ENCODE measurements at regions of chr4 and their contacts with region 1.

Region 1: DNA sequence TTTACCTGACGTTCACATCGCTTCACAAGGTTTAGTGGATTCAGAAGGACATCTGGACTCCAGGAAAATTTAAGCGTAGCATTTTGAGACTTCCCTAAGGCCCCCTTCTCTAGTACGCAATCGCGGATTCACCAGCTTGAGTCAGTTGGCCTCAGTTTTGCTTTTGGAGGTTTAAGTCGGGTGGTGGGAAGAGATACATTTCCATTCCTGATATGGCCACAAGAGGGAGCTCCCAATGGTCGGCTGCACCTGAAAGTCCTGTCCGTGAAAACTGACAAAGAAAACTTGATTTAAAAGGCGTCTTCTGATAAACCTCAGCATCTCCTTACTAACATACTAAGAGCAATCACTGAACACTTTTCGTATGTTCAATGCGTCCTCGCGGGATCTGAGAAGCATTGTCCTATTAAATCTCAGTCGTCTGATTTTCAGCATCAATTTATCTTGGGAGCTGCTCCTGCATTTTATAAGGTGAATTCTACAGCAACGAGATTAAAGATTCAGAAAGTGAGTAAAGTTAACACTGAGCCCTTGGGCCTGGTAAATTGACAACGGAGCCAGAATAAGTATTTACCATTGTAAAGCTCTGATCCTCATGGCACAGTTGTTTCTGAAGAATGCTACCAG is 50.6 kb downstream of the LGI2 start:
- DNase-seq: peak; percentile 47
- ATAC-seq: peak; percentile 50
- H3K4me3 Mint-ChIP-seq: no peak overlapping the region; the same call in 1 of the 2 replicates
- H3K27ac Mint-ChIP-seq: no peak overlapping the region
- H3K4me1 Mint-ChIP-seq: peaks cover 24% of the 10 kb centered on the region
- H3K27me3 Mint-ChIP-seq: no peaks in the 10 kb centered on the region; the same call in none of the 2 replicates
- CTCF ChIP-seq: peak; percentile 85

Region 2: DNA sequence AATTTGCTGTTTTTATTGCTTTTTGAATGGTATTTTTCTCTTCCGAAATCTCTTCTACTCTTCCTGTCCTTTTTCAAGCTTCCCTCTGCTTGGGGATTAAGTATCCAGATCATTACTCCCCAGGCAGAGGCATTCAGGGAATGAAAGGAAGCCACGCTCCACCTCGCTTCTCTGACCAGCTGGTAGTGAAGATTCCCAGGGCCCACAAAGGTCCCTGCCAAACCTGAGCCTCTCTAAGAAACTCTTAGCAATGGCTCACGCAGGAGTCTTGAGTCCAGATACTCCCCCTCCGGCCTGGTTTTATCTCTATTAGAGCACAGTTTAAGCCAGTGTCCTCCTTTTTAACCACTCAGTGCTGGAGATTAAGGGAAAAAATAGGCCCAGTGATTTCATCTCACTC is 236.2 kb before region 1 on chr4:
- CTCF ChIA-PET with region 1: interaction called, 11 read pairs
- POLR2A ChIA-PET with region 1: interaction called, 3 read pairs
- DNase-seq: peak; percentile 42
- ATAC-seq: peak; percentile 95
- H3K4me3 Mint-ChIP-seq: no peak overlapping the region
- H3K27ac Mint-ChIP-seq: peak overlapping the region; percentile 94
- H3K4me1 Mint-ChIP-seq: peaks cover 25% of the 10 kb centered on the region
- H3K27me3 Mint-ChIP-seq: no peaks in the 10 kb centered on the region
- CTCF ChIP-seq: no peak

Region 3: GRCh38 chr4:24794916-24795665 is 185.1 kb before region 1 on chr4 and contains the start of gene SOD3:
- CTCF ChIA-PET with region 1: interaction called, 11 read pairs
- POLR2A ChIA-PET with region 1: no interaction called
- DNase-seq: peak; percentile 72
- ATAC-seq: peak; percentile 92
- H3K4me3 Mint-ChIP-seq: peak within 1 kb of the TSS; percentile 70
- H3K27ac Mint-ChIP-seq: peak within 1 kb of the TSS; percentile 54
- H3K4me1 Mint-ChIP-seq: peaks cover 24% of the 10 kb centered on the region
- H3K27me3 Mint-ChIP-seq: peaks cover 59% of the 10 kb centered on the region
- CTCF ChIP-seq: no peak
- total RNA-seq, gene SOD3: 4.1 to 8.2 TPM (median 8.0 TPM) in 3 replicates

Region 4: DNA sequence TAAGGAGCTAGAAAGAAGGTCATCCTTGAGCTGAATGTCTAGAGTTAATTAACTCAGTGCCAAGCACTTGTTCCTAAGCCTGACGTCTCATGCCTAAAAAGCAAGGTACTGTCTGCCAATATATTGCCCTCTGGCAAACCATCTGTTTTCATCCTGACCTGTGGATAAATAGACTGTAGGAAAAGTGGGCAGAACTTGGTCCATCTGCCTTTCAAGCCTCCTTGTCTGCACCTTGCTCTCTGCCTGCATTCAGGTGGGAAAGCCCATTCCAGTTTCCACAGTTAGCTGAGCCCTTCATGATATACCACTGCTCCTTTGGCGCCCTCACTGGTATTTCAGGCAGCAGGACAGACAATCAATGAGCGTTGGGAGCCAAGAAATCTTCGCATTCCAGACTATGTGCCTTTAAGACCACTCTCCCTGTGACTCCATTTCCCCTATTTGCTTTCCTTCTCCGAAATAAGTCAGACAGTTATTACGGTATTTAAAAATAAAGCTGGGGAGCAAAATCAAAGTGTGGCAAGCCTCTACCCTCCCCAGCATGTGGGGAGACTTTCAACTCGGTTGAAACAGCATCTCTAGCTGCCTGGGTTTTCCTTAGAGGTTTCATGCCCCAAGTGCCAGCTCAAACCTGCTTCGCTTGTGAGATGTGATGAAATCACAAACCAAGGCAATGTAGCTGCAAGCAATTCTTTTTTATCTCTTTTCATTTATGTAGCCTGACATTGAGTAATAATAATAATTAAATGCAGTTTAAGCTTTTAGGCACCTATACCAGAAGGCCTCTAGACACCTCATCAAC is 64.9 kb before region 1 on chr4:
- CTCF ChIA-PET with region 1: interaction called, 11 read pairs
- POLR2A ChIA-PET with region 1: no interaction called
- DNase-seq: peak; percentile 18
- ATAC-seq: peak; percentile 5
- H3K4me3 Mint-ChIP-seq: no peak overlapping the region
- H3K27ac Mint-ChIP-seq: no peak overlapping the region
- H3K4me1 Mint-ChIP-seq: peaks cover 27% of the 10 kb centered on the region
- H3K27me3 Mint-ChIP-seq: peaks cover 40% of the 10 kb centered on the region
- CTCF ChIP-seq: no peak

Region 5: DNA sequence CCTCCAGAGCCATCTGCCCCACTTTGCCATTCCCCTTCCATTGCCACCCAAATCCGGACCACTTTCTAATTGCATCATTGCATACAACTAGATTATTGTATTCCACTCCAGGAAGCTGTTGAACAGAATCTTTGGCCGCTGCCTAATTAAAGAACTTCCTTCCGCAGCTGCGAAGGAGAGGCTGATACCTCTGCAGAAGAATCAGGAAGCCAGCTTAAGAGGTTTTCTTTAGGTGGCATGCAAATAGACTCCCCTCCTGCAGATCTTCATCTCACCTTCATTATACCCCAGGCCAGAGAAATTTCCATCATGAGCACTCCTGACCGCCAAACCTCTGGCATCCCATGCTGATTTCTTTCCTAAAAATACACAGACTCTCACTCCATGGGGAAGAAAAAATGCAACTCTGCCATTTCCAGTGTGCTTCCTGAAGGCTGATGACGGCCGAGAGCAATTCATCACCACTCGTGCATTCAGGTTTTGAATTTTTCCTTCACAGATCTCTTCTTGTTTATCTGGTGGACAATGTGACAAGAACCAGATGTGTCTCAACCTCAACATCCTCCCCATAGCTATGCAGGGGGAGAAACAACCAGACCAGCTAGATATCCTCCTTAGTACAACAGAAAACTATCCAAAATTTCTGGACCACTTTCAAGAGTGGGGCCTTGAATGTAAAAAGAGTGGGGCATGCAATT is 19.4 kb after region 1 on chr4:
- CTCF ChIA-PET with region 1: interaction called, 28 read pairs
- POLR2A ChIA-PET with region 1: no interaction called
- DNase-seq: no peak
- ATAC-seq: peak; percentile 91
- H3K4me3 Mint-ChIP-seq: peak overlapping the region; percentile 2; the same call in 1 of the 2 replicates
- H3K27ac Mint-ChIP-seq: peak overlapping the region; percentile 77
- H3K4me1 Mint-ChIP-seq: peaks cover 29% of the 10 kb centered on the region
- H3K27me3 Mint-ChIP-seq: no peaks in the 10 kb centered on the region; the same call in 1 of the 2 replicates
- CTCF ChIP-seq: no peak

Region 6: GRCh38 chr4:25031077-25031621 is 51.0 kb after region 1 on chr4:
- CTCF ChIA-PET with region 1: interaction called, 11 read pairs
- POLR2A ChIA-PET with region 1: no interaction called
- DNase-seq: peak; percentile 36
- ATAC-seq: peak; percentile 65
- H3K4me3 Mint-ChIP-seq: peak overlapping the region; percentile 70
- H3K27ac Mint-ChIP-seq: no peak overlapping the region
- H3K4me1 Mint-ChIP-seq: peaks cover 29% of the 10 kb centered on the region
- H3K27me3 Mint-ChIP-seq: peaks cover 58% of the 10 kb centered on the region
- CTCF ChIP-seq: no peak

Region 7: DNA sequence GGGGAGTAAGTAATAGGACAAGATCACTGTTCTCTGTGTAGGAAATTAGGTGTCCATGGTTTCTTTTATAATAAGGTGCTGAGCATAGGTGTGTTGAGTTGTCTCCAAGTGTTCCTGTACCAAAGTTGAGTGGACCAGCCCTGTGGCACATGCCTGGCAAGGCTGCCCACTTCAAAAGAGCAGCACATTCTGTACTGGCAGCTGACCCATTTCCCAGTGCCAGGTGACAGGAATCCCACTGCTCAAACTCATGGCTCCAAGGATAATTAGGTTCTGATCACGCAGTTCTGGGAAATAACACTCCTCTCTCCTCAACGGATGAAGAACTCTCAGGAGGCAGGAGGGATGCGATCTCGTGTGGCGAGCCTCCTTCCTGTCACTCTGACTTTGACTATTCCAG is 63.4 kb after region 1 on chr4:
- CTCF ChIA-PET with region 1: interaction called, 21 read pairs
- POLR2A ChIA-PET with region 1: no interaction called
- DNase-seq: no peak
- ATAC-seq: no peak
- H3K4me3 Mint-ChIP-seq: no peak overlapping the region
- H3K27ac Mint-ChIP-seq: no peak overlapping the region
- H3K4me1 Mint-ChIP-seq: peaks cover 8% of the 10 kb centered on the region
- H3K27me3 Mint-ChIP-seq: peaks cover 16% of the 10 kb centered on the region
- CTCF ChIP-seq: no peak

Region 8: DNA sequence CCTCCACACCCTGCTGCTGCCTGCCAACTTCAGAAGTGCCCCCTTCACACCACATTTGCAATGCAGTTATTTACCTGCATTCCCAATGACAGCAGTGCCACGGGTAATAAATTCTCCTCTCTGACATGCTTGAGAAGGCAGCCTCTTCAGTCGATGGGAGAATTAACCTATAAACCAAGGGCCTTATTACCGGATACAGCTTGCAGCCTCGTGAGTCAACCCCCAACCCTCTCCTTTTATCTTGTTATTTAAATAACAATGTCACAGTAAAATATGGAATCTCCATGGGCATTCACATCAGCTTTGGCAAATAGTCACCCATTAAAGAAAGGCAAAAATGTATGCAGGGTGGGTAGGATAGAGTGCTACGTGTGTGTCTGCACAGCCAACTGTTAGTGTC is 85.3 kb after region 1 on chr4:
- CTCF ChIA-PET with region 1: no interaction called
- POLR2A ChIA-PET with region 1: no interaction called
- DNase-seq: no peak
- ATAC-seq: peak; percentile 34
- H3K4me3 Mint-ChIP-seq: peak overlapping the region; percentile 25; the same call in 1 of the 2 replicates
- H3K27ac Mint-ChIP-seq: peak overlapping the region; percentile 92
- H3K4me1 Mint-ChIP-seq: peaks cover 61% of the 10 kb centered on the region
- H3K27me3 Mint-ChIP-seq: peaks cover 7% of the 10 kb centered on the region
- CTCF ChIP-seq: no peak

Measured in WTC11 (cell line).